ENCODE measurements at regions of chr10 and their contacts with region 1.

Region 1: DNA sequence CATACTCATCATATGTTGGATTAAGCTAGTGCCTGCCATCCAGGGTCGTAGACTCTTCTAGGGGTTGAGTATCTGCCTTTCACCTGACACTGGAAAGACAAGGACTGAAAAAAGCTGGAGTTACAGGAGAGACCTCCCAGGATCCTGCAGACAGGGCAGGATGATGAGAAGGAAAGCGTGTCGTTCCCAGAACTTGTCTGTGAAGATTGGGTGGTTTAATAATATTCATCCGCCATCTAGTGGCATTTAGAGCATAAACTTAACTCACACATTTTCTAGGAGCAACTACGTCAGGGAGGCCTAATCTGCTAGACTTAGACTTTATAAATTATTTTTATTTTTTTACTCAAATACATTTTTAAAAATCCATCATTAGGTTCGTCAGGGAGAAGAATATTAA is 59.6 kb downstream of the ADRB1 start:
- DNase-seq: peak in 1 of 10 donors; percentile 11
- H3K4me3 ChIP-seq: peak overlapping the region in 1 of 59 donors; percentile 7
- H3K27ac ChIP-seq: no peak overlapping the region
- H3K27me3 ChIP-seq: no peaks in the 10 kb centered on the region
- CTCF ChIP-seq: peak; percentile 48 to 91 (median 78)

Region 2: DNA sequence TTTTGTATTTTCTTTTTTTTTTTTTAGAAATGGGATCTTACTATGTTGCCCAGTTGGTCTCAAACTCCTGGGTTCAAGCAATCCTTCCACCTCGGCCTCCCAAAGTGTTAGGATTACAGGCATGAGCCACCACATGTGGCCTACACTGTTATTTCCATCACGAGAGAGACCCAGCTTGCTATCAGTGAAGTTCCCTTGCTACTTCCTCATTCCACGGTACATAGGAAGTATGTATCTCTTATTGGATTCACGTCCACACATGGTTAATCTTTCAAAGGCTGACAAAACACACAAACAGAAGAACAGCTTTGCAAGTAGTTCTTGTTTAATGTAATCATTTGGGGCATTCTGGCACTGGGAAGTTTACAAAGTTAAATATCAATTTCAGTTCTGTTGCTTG is 300.3 kb before region 1 on chr10:
- intact Hi-C with region 1: loop called (anchors 1 to 2 kb)
- DNase-seq: no peak
- H3K4me3 ChIP-seq: no peak overlapping the region
- H3K27ac ChIP-seq: peak overlapping the region in 14 of 59 donors; percentile 3 to 64 (median 28)
- H3K27me3 ChIP-seq: no peaks in the 10 kb centered on the region
- CTCF ChIP-seq: no peak

Region 3: DNA sequence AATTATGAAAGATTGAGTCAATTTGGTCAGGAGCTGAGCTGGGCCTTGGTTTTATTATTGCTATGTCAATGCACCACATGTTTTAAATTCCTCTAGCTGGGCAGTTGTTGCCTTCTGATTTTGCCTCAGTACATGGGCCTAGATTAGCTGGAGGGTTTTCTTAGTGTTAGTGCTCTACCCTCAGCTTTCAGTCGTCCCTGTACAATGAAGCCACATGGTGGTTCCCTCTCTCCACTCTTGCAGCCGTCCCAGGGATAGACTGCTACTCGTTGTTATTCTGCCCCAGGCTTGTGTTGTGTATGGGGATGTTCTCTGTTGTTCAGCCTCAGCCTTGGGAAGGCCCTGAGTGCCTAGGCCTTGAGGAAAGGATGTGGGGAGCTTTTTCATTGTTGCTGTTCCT is 211.8 kb before region 1 on chr10:
- intact Hi-C with region 1: loop called in 1 of 2 experiments (anchors 2 kb)
- DNase-seq: peak in 4 of 10 donors; percentile 32 to 52 (median 40)
- H3K4me3 ChIP-seq: no peak overlapping the region
- H3K27ac ChIP-seq: peak overlapping the region in 47 of 59 donors; percentile 2 to 82 (median 61)
- H3K27me3 ChIP-seq: no peaks in the 10 kb centered on the region
- CTCF ChIP-seq: peak in 22 of 56 donors; percentile 7 to 59 (median 26)

Measured in dorsolateral prefrontal cortex (tissue), 120 donors.